CD4-positive, alpha-beta T cell (primary cell): ENCODE measurements at regions of chr22 and their contacts with region 1.

Region 1: GRCh38 chr22:50507991-50508884 is at the start of gene NCAPH2:
- DNase-seq: peak in 10 of 14 experiments; percentile 94 to 99 (median 97)
- ATAC-seq: peak; percentile 75
- H3K4me3 ChIP-seq: peak within 1 kb of the TSS; percentile 92
- H3K4me3 Mint-ChIP-seq: peak within 1 kb of the TSS; percentile 94
- H3K27ac ChIP-seq: peak within 1 kb of the TSS; percentile 89 to 92
- H3K27ac Mint-ChIP-seq: peak within 1 kb of the TSS; percentile 95
- H3K4me1 ChIP-seq: peaks cover 38% of the 10 kb centered on the region
- H3K4me1 Mint-ChIP-seq: peaks cover 21% of the 10 kb centered on the region
- H3K27me3 ChIP-seq: no peaks in the 10 kb centered on the region
- H3K27me3 Mint-ChIP-seq: no peaks in the 10 kb centered on the region
- CTCF ChIP-seq: no peak
- total RNA-seq, gene NCAPH2: 184 to 185 TPM

Region 2: DNA sequence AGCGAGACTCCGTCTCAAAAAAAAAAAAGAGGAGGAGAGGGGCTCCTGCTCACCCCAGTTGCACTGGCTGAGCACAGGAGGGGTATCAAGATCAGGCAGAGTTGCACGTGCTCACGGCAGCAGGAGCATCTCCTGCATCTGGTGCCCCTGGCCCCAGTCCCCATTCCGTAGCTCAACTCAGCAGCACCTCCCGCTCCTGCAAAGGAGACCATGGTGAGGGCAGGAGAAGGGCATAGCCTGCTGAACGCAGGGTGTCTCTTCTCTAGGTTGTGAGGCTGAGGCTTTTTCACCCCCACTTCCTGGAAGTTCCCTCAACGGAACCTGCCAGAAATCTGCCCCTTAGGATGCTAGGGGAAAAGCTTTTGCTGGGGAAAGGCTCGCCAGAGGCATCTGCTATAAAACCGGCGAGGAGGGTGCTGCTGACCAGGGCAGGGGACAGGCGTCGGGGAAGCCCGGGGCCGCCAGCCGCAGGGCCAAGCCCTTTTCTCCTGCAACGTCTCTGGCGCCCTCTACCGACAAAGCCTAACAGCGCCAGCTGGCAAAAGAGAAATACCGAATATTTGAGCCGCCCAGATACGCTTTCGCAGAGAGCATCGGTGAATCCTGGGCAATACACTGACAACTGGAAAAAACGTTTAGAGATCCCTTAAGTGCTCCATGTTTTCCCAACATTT is 166.1 kb before region 1 on chr22:
- CTCF ChIA-PET with region 1: no interaction called
- POLR2A ChIA-PET with region 1: interaction called, 6 read pairs
- intact Hi-C with region 1: loop called in 1 of 2 experiments (anchors 10 kb)
- DNase-seq: peak; percentile 80 to 94 (median 87)
- ATAC-seq: peak; percentile 53
- H3K4me3 ChIP-seq: peak overlapping the region; percentile 62
- H3K4me3 Mint-ChIP-seq: peak overlapping the region; percentile 88
- H3K27ac ChIP-seq: peak overlapping the region; percentile 84 to 85
- H3K27ac Mint-ChIP-seq: peak overlapping the region; percentile 98
- H3K4me1 ChIP-seq: peaks cover 27% of the 10 kb centered on the region
- H3K4me1 Mint-ChIP-seq: peaks cover 7% of the 10 kb centered on the region
- H3K27me3 ChIP-seq: no peaks in the 10 kb centered on the region
- H3K27me3 Mint-ChIP-seq: no peaks in the 10 kb centered on the region
- CTCF ChIP-seq: peak; percentile 95

Region 3: GRCh38 chr22:50399751-50400331 is 108.4 kb before region 1 on chr22:
- CTCF ChIA-PET with region 1: no interaction called
- POLR2A ChIA-PET with region 1: no interaction called
- intact Hi-C with region 1: no loop called
- DNase-seq: peak in 10 of 14 experiments; percentile 7 to 61 (median 18)
- ATAC-seq: no peak
- H3K4me3 ChIP-seq: no peak overlapping the region
- H3K4me3 Mint-ChIP-seq: no peak overlapping the region
- H3K27ac ChIP-seq: peak overlapping the region; percentile 5 to 30
- H3K27ac Mint-ChIP-seq: peak overlapping the region; percentile 80
- H3K4me1 ChIP-seq: peaks cover 20% of the 10 kb centered on the region
- H3K4me1 Mint-ChIP-seq: peaks cover 14% of the 10 kb centered on the region
- H3K27me3 ChIP-seq: no peaks in the 10 kb centered on the region
- H3K27me3 Mint-ChIP-seq: no peaks in the 10 kb centered on the region
- CTCF ChIP-seq: no peak

Region 4: GRCh38 chr22:50474668-50475492 is 33.4 kb before region 1 on chr22 and contains the start of gene SBF1:
- CTCF ChIA-PET with region 1: interaction called, 5 read pairs
- POLR2A ChIA-PET with region 1: interaction called, 31 read pairs
- intact Hi-C with region 1: loop called (anchors 1 to 5 kb)
- DNase-seq: peak; percentile 73 to 95 (median 86)
- ATAC-seq: peak; percentile 64
- H3K4me3 ChIP-seq: peak within 1 kb of the TSS; percentile 80
- H3K4me3 Mint-ChIP-seq: peak within 1 kb of the TSS; percentile 92
- H3K27ac ChIP-seq: peak within 1 kb of the TSS; percentile 40 to 94
- H3K27ac Mint-ChIP-seq: peak within 1 kb of the TSS; percentile 94
- H3K4me1 ChIP-seq: peaks cover 51% of the 10 kb centered on the region
- H3K4me1 Mint-ChIP-seq: peaks cover 47% of the 10 kb centered on the region
- H3K27me3 ChIP-seq: no peaks in the 10 kb centered on the region
- H3K27me3 Mint-ChIP-seq: no peaks in the 10 kb centered on the region
- CTCF ChIP-seq: no peak
- total RNA-seq, gene SBF1: 220 to 227 TPM

Region 5: DNA sequence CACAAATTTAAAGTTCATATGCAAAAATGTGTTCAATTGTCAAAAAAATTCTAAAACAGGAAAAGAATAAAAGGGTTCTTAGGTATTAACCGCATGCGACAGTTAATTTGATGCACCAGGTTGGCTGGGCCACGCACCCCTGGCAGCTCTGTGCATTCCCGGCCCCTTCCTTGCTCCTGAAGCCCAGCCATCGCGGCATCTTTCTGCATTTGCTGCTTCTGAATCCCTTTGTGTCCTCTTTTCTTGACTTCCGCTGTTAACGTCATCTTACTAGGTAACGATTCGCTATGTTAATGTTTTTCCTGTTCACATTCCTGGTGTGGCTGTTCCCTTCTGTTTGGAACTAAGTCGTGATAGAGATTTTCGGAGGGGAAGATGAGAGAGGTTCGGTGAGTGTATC is 29.5 kb after region 1 on chr22:
- CTCF ChIA-PET with region 1: no interaction called
- POLR2A ChIA-PET with region 1: interaction called, 52 read pairs
- intact Hi-C with region 1: no loop called
- DNase-seq: no peak
- ATAC-seq: no peak
- H3K4me3 ChIP-seq: no peak overlapping the region
- H3K4me3 Mint-ChIP-seq: no peak overlapping the region
- H3K27ac ChIP-seq: peak overlapping the region; percentile 92 to 99
- H3K27ac Mint-ChIP-seq: peak overlapping the region; percentile 99
- H3K4me1 ChIP-seq: peaks cover 51% of the 10 kb centered on the region
- H3K4me1 Mint-ChIP-seq: peaks cover 43% of the 10 kb centered on the region
- H3K27me3 ChIP-seq: no peaks in the 10 kb centered on the region
- H3K27me3 Mint-ChIP-seq: peaks cover 9% of the 10 kb centered on the region
- CTCF ChIP-seq: no peak

Region 6: DNA sequence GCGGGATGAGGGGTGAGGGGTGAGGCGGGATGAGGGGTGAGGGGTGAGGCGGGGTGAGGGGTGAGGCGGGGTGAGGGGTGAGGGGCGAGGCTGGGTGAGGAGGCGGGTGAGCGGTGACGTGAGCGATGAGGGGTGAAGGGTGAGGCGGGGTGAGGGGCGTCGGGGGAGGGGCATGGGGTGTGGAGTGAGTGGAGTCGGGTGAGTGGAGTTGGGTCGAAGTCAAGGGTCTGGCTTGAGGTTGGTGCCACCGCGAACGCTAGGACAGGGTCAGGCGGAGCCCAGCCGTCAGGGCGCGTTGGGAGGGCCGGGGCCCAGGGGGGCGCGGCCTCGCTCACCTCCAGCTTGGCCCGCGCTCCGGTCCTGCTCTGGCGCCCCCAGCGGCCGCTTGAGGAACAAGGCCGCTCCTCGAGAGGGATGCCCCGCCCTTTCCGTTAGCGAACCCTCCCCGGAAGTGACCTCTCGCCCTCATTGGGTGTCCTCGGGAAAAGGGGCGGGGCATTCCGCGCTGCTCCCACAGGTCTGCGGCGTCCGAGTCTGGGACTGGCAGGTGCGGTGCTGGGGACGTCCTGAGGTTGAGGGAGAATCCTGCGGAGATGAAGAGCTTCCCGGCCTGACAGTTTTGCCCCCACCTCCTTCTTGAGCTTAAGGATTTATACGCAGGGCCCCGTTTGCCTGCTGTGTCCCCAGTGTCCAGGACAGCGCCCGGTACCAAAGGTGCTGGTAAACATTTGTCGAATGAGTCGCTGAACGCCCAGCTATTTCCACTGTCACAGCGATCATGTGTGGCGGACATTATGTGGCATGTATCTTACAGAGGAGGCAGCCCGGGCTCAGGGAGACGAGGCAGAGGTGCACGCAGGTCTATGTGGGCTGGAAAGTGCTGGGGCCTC is 54.5 kb after region 1 on chr22 and contains the start of gene SYCE3:
- CTCF ChIA-PET with region 1: interaction called, 22 read pairs
- POLR2A ChIA-PET with region 1: interaction called, 8 read pairs
- intact Hi-C with region 1: loop called in 1 of 2 experiments (anchors 1 kb)
- DNase-seq: peak; percentile 93 to 99 (median 96)
- ATAC-seq: peak; percentile 94
- H3K4me3 ChIP-seq: peak within 1 kb of the TSS; percentile 84
- H3K4me3 Mint-ChIP-seq: peak within 1 kb of the TSS; percentile 96
- H3K27ac ChIP-seq: no peak within 1 kb of the TSS
- H3K27ac Mint-ChIP-seq: peak within 1 kb of the TSS; percentile 85
- H3K4me1 ChIP-seq: peaks cover 10% of the 10 kb centered on the region
- H3K4me1 Mint-ChIP-seq: peaks cover 16% of the 10 kb centered on the region
- H3K27me3 ChIP-seq: no peaks in the 10 kb centered on the region
- H3K27me3 Mint-ChIP-seq: no peaks in the 10 kb centered on the region
- CTCF ChIP-seq: peak; percentile 84
- total RNA-seq, gene SYCE3: not detected